ENCODE measurements at regions of chr12 and their contacts with region 1.

Region 1: DNA sequence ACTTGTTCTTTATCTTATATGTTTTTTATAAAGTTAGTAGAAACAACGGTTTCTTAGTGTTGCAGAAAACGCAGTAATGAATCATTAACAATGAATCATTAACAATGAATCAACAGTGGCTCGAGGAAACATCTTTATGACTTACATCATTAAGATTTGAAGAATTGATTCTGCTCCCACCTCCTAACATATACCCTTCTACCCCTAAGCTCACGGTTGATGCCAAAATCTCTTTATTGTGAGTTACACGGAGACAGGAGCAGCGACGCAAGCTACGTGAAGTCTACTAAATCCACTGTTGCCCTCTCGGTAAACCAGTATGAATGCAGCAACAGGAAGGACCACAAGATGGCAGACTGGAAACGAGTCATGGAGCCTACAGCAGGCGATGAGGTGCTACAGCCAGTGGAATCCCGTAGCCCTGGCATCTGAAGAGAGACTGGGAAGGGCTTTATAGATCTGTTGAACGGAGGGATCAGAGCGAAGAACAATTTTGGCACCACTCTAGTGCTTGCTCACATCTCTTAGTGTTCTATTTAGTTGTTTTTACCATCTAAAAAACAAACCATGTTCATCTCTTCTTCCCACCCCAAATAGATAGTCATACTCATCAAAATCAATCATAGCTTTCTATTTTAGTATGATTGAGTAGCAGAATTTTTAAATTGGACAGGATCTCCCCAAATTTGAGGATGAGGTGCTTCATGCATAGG is 332.7 kb downstream of the DUSP6 start:
- DNase-seq: peak; percentile 63 to 72 (median 68)
- H3K4me3 ChIP-seq: peak overlapping the region in 1 of 2 donors; percentile 29
- H3K4me3 Mint-ChIP-seq: no peak overlapping the region
- H3K27ac ChIP-seq: no peak overlapping the region
- H3K27ac Mint-ChIP-seq: no peak overlapping the region
- H3K4me1 ChIP-seq: peaks cover 10% of the 10 kb centered on the region
- H3K4me1 Mint-ChIP-seq: peaks cover 0 to 1% (median 0%) of the 10 kb centered on the region in 4 donors
- H3K27me3 ChIP-seq: no peaks in the 10 kb centered on the region
- H3K27me3 Mint-ChIP-seq: peaks cover 0 to 2% of the 10 kb centered on the region in 2 donors

Region 2: GRCh38 chr12:88111074-88111652 is 908.4 kb before region 1 on chr12:
- CTCF ChIA-PET with region 1: no interaction called
- POLR2A ChIA-PET with region 1: no interaction called
- intact Hi-C with region 1: loop called (anchors 1 kb)
- DNase-seq: peak in 4 of 5 donors; percentile 16 to 27 (median 22)
- H3K4me3 ChIP-seq: no peak overlapping the region
- H3K4me3 Mint-ChIP-seq: peak overlapping the region in 7 of 8 donors; percentile 45 to 77 (median 64)
- H3K27ac ChIP-seq: no peak overlapping the region
- H3K27ac Mint-ChIP-seq: peak overlapping the region in 3 of 7 donors; percentile 43 to 84 (median 75)
- H3K4me1 ChIP-seq: no peaks in the 10 kb centered on the region
- H3K4me1 Mint-ChIP-seq: peaks cover 2 to 5% (median 3%) of the 10 kb centered on the region in 4 donors
- H3K27me3 ChIP-seq: no peaks in the 10 kb centered on the region
- H3K27me3 Mint-ChIP-seq: no peaks in the 10 kb centered on the region

Region 3: DNA sequence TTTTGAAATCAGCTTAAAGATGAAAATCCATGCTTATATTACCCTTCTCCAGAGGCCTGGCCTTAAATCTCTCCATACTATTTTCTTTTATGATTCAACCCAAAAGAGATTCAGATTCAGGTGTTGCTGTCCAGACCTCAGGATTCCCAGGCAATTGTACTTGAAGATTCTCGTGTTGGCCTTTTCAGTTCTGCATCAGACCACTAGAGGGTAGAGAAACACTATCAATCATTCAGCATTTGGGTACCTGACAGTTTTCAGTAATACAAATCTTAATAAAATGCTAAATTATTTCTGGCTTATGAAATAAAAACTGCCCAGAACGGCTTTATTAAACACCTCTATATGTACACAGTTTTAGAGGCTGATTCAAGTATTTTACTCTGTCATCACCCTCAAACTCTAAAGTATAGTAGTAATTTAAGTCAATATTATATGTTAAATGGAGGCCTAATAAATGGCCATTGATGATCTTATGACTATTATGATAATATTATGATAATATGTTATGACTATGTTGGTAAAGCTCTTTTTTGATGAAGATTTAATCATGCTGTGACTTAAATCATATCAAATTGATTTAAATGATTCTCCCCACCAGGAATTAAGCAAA is 31.6 kb after region 1 on chr12:
- CTCF ChIA-PET with region 1: interaction called, 9 read pairs
- POLR2A ChIA-PET with region 1: no interaction called
- intact Hi-C with region 1: loop called (anchors 1 kb)
- DNase-seq: peak; percentile 35 to 60 (median 51)
- H3K4me3 ChIP-seq: no peak overlapping the region
- H3K4me3 Mint-ChIP-seq: no peak overlapping the region
- H3K27ac ChIP-seq: no peak overlapping the region
- H3K27ac Mint-ChIP-seq: no peak overlapping the region
- H3K4me1 ChIP-seq: no peaks in the 10 kb centered on the region
- H3K4me1 Mint-ChIP-seq: peaks cover 0 to 3% (median 1%) of the 10 kb centered on the region in 4 donors
- H3K27me3 ChIP-seq: no peaks in the 10 kb centered on the region
- H3K27me3 Mint-ChIP-seq: peaks cover 0 to 1% of the 10 kb centered on the region in 2 donors

Region 4: GRCh38 chr12:89461649-89462612 is 442.4 kb after region 1 on chr12:
- CTCF ChIA-PET with region 1: interaction called, 138 read pairs
- POLR2A ChIA-PET with region 1: interaction called, 3 read pairs
- intact Hi-C with region 1: loop called (anchors 1 kb)
- DNase-seq: peak in 4 of 5 donors; percentile 57 to 62 (median 58)
- H3K4me3 ChIP-seq: no peak overlapping the region
- H3K4me3 Mint-ChIP-seq: peak overlapping the region in 4 of 8 donors; percentile 40 to 72 (median 58)
- H3K27ac ChIP-seq: no peak overlapping the region
- H3K27ac Mint-ChIP-seq: peak overlapping the region in 5 of 7 donors; percentile 49 to 78 (median 61)
- H3K4me1 ChIP-seq: peaks cover 12% of the 10 kb centered on the region
- H3K4me1 Mint-ChIP-seq: peaks cover 15 to 18% (median 17%) of the 10 kb centered on the region in 4 donors
- H3K27me3 ChIP-seq: no peaks in the 10 kb centered on the region
- H3K27me3 Mint-ChIP-seq: no peaks in the 10 kb centered on the region

Region 5: GRCh38 chr12:89529738-89530137 is 510.2 kb after region 1 on chr12:
- CTCF ChIA-PET with region 1: interaction called, 138 read pairs
- POLR2A ChIA-PET with region 1: no interaction called
- intact Hi-C with region 1: loop called (anchors 1 kb)
- DNase-seq: peak in 4 of 5 donors; percentile 47 to 57 (median 52)
- H3K4me3 ChIP-seq: no peak overlapping the region
- H3K4me3 Mint-ChIP-seq: no peak overlapping the region
- H3K27ac ChIP-seq: no peak overlapping the region
- H3K27ac Mint-ChIP-seq: peak overlapping the region in 2 of 7 donors; percentile 12 to 81
- H3K4me1 ChIP-seq: peaks cover 11% of the 10 kb centered on the region
- H3K4me1 Mint-ChIP-seq: peaks cover 7 to 23% (median 14%) of the 10 kb centered on the region in 4 donors
- H3K27me3 ChIP-seq: no peaks in the 10 kb centered on the region
- H3K27me3 Mint-ChIP-seq: no peaks in the 10 kb centered on the region

Region 6: DNA sequence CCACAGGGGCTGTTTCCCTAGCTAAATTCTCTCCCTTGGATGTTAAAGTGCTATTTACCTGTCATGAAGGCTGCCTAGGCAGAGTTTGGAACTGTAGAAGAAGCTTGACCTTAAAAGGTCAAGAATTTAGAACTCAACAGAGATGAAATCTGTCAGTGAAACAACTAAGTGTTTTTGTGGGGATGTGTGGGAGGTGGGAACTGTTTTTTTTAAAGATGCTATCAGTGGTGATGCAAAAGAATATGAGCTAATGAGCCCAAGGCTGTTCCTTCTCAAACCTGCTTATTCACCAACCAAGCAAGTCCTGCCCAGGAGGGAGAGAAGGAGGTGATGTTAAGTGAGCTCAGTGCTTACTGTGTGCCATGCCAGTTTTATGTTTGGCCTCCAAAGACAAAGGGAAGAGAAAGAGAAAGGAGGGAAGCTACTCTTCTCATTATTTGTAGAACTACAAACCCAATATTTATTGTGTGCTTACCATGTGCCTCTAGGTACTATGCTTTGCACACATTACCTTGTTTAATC is 547.1 kb after region 1 on chr12:
- CTCF ChIA-PET with region 1: no interaction called
- POLR2A ChIA-PET with region 1: no interaction called
- intact Hi-C with region 1: no loop called
- DNase-seq: no peak
- H3K4me3 ChIP-seq: no peak overlapping the region
- H3K4me3 Mint-ChIP-seq: peak overlapping the region in 1 of 8 donors; percentile 7
- H3K27ac ChIP-seq: no peak overlapping the region
- H3K27ac Mint-ChIP-seq: no peak overlapping the region
- H3K4me1 ChIP-seq: no peaks in the 10 kb centered on the region
- H3K4me1 Mint-ChIP-seq: peaks cover 0 to 2% (median 0%) of the 10 kb centered on the region in 4 donors
- H3K27me3 ChIP-seq: no peaks in the 10 kb centered on the region
- H3K27me3 Mint-ChIP-seq: no peaks in the 10 kb centered on the region

Region 7: GRCh38 chr12:90940872-90941499 is 1921.4 kb after region 1 on chr12:
- CTCF ChIA-PET with region 1: no interaction called
- POLR2A ChIA-PET with region 1: no interaction called
- intact Hi-C with region 1: loop called (anchors 5 kb)
- DNase-seq: peak in 2 of 5 donors; percentile 9
- H3K4me3 ChIP-seq: no peak overlapping the region
- H3K4me3 Mint-ChIP-seq: no peak overlapping the region
- H3K27ac ChIP-seq: no peak overlapping the region
- H3K27ac Mint-ChIP-seq: no peak overlapping the region
- H3K4me1 ChIP-seq: no peaks in the 10 kb centered on the region
- H3K4me1 Mint-ChIP-seq: no peaks in the 10 kb centered on the region
- H3K27me3 ChIP-seq: no peaks in the 10 kb centered on the region
- H3K27me3 Mint-ChIP-seq: peaks cover 4 to 5% of the 10 kb centered on the region in 2 donors

Measured in CD4-positive, alpha-beta memory T cell (primary cell).